Natural killer cell (primary cell): ENCODE measurements at regions of chr9 and their contacts with region 1.

Region 1: GRCh38 chr9:98101868-98102273 is 17.2 kb downstream of the TRIM14 start:
- DNase-seq: peak; percentile 61 to 96
- ATAC-seq: peak; percentile 95 to 98 (median 98)
- H3K4me3 ChIP-seq: no peak overlapping the region
- H3K4me3 Mint-ChIP-seq: peak overlapping the region; percentile 85
- H3K27ac ChIP-seq: peak overlapping the region; percentile 68
- H3K27ac Mint-ChIP-seq: peak overlapping the region; percentile 89 to 92
- H3K4me1 ChIP-seq: peaks cover 74% of the 10 kb centered on the region
- H3K4me1 Mint-ChIP-seq: peaks cover 63 to 69% of the 10 kb centered on the region in 2 donors
- H3K27me3 ChIP-seq: no peaks in the 10 kb centered on the region
- H3K27me3 Mint-ChIP-seq: no peaks in the 10 kb centered on the region
- CTCF ChIP-seq: no peak

Region 2: DNA sequence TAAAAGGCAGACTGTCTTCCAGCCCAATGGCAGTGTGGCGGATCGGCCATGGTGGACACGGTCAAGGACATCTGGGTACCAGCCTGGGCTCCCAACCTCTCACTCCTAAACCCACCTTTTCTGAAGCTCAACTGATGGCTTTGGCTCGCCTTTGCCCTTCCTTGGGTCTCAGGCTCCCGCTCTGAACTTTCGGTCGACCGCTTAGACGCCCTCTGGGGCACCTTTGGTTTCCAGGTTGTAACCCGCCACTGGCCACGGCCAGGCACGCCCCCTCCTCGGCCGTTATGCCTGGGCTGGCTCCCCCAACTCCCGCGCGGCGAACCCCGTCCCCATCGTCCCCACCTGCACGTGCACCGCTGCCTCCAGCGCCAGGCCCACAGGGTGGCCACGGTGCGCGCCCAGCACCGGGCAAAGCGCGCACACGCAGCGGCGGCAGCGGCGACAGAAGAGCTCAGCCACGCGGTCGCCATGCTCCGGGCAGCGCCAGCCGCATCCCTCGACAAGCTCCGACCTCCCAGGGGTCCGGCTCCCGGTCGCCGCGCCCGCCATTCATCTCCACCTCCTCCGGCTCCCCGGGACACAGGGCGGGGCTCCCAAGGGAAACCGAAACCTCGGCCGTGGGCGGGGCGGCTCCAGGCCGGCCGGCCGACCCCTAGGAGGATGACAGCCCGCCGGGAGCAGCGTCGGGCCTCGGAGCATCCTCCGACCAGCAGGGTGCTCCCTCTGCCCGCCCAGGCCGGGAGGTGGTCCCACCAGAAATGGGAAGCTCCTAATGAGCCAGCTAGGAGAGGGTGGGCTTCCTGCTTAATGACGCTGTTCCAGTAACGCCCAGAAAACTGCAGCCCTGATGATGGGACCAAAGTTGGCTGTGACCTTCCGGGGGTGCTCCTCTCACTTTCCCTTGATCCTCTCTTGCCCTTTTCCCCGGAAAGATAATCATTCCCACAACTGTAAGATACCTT is 17.1 kb after region 1 on chr9 and contains the start of gene TRIM14:
- intact Hi-C with region 1: loop called (anchors 2 kb)
- DNase-seq: peak; percentile 55 to 73
- ATAC-seq: peak; percentile 74 to 78 (median 75)
- H3K4me3 ChIP-seq: peak within 1 kb of the TSS; percentile 48
- H3K4me3 Mint-ChIP-seq: peak within 1 kb of the TSS; percentile 91
- H3K27ac ChIP-seq: peak within 1 kb of the TSS; percentile 81
- H3K27ac Mint-ChIP-seq: peak within 1 kb of the TSS; percentile 92 to 95
- H3K4me1 ChIP-seq: peaks cover 30% of the 10 kb centered on the region
- H3K4me1 Mint-ChIP-seq: peaks cover 33 to 34% of the 10 kb centered on the region in 2 donors
- H3K27me3 ChIP-seq: no peaks in the 10 kb centered on the region
- H3K27me3 Mint-ChIP-seq: no peaks in the 10 kb centered on the region
- CTCF ChIP-seq: no peak
- total RNA-seq, gene TRIM14: 45.1 to 66.5 (median 65.3) TPM

Region 3: GRCh38 chr9:98255578-98256296 is 153.9 kb after region 1 on chr9 and contains the start of gene TBC1D2:
- intact Hi-C with region 1: loop called (anchors 10 kb)
- DNase-seq: peak; percentile 97 to 98
- ATAC-seq: peak; percentile 91 to 97 (median 91)
- H3K4me3 ChIP-seq: peak within 1 kb of the TSS; percentile 97
- H3K4me3 Mint-ChIP-seq: peak within 1 kb of the TSS; percentile 98
- H3K27ac ChIP-seq: peak within 1 kb of the TSS; percentile 95
- H3K27ac Mint-ChIP-seq: peak within 1 kb of the TSS; percentile 95 to 98
- H3K4me1 ChIP-seq: peaks cover 20% of the 10 kb centered on the region
- H3K4me1 Mint-ChIP-seq: peaks cover 33 to 40% of the 10 kb centered on the region in 2 donors
- H3K27me3 ChIP-seq: no peaks in the 10 kb centered on the region
- H3K27me3 Mint-ChIP-seq: no peaks in the 10 kb centered on the region
- CTCF ChIP-seq: no peak
- total RNA-seq, gene TBC1D2: 5.0 to 8.9 (median 7.0) TPM

Region 4: GRCh38 chr9:98357921-98358535 is 256.2 kb after region 1 on chr9:
- intact Hi-C with region 1: no loop called
- DNase-seq: no peak
- ATAC-seq: no peak
- H3K4me3 ChIP-seq: no peak overlapping the region
- H3K4me3 Mint-ChIP-seq: no peak overlapping the region
- H3K27ac ChIP-seq: no peak overlapping the region
- H3K27ac Mint-ChIP-seq: no peak overlapping the region
- H3K4me1 ChIP-seq: no peaks in the 10 kb centered on the region
- H3K4me1 Mint-ChIP-seq: no peaks in the 10 kb centered on the region
- H3K27me3 ChIP-seq: no peaks in the 10 kb centered on the region
- H3K27me3 Mint-ChIP-seq: peaks cover 6 to 24% of the 10 kb centered on the region in 2 donors
- CTCF ChIP-seq: no peak